IMR-90 (cell line): ENCODE measurements at regions of chr7 and their contacts with region 1.

Region 1: GRCh38 chr7:45872116-45873034 is 507 bp downstream of the CCDC201 start:
- DNase-seq: no peak
- ATAC-seq: 0 out of 2 replicates have a peak, but pooled peaks have one; percentile 22
- H3K4me3 ChIP-seq: no peak overlapping the region
- H3K27ac ChIP-seq: no peak overlapping the region
- H3K4me1 ChIP-seq: peaks cover 6% of the 10 kb centered on the region
- H3K27me3 ChIP-seq: no peaks in the 10 kb centered on the region
- CTCF ChIP-seq: peak; percentile 43
- POLR2A ChIP-seq: no peak
- RAD21 ChIP-seq: peak; percentile 17; the same call in 1 of the 2 replicates

Region 2: DNA sequence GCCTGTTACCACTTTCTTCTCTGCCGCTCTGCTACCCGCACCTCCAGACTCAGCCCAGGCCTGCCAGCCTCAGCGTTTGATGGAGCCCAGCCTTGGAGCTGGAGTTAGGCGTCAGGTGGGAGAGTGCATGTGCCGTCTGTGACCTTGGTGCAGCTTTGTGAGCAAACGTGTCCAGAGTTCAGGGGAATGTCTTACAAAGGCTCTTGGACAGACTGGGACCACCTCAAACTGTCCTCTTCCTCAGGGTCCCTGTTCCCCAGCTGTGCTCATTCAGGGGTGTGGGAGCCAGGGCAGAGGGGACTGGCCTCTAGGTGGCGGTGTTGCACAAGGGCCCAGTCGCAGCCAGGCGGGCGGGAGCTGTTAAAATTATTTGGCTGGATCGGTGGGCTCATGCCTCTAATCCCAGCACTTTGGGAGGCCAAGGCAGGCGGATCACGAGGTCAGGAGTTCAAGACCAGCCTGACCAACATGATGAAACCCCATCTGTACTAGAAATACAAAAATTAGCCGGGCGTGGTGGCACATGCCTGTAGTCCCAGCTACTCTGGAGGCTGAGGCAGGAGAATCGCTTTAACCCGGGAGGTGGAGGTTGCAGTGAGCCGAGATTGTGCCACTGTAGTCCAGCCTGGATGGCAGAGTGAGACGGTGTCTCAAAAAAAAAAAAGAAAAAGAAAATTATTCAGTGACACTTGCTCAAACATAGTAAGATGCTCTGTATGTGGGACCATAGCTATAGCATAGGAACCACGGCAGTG is 209.0 kb before region 1 on chr7:
- CTCF ChIA-PET with region 1: no interaction called
- POLR2A ChIA-PET with region 1: no interaction called
- dilution Hi-C with region 1: no loop called
- in situ Hi-C with region 1: loop called (anchors 25 kb)
- intact Hi-C with region 1: no loop called
- DNase-seq: peak; percentile 12
- ATAC-seq: peak; percentile 80
- H3K4me3 ChIP-seq: no peak overlapping the region
- H3K27ac ChIP-seq: no peak overlapping the region
- H3K4me1 ChIP-seq: no peaks in the 10 kb centered on the region
- H3K27me3 ChIP-seq: peaks cover 12% of the 10 kb centered on the region; the same call in 1 of the 2 replicates
- CTCF ChIP-seq: peak; percentile 78
- POLR2A ChIP-seq: no peak
- RAD21 ChIP-seq: peak; percentile 83

Region 3: GRCh38 chr7:45888185-45888992 is 16.0 kb after region 1 on chr7 and contains the start of gene IGFBP1:
- CTCF ChIA-PET with region 1: no interaction called
- POLR2A ChIA-PET with region 1: no interaction called
- dilution Hi-C with region 1: no loop called
- in situ Hi-C with region 1: no loop called
- intact Hi-C with region 1: no loop called
- DNase-seq: peak; percentile 25
- ATAC-seq: peak; percentile 77
- H3K4me3 ChIP-seq: peak within 1 kb of the TSS; percentile 25
- H3K27ac ChIP-seq: no peak within 1 kb of the TSS; the same call in 1 of the 2 replicates
- H3K4me1 ChIP-seq: no peaks in the 10 kb centered on the region
- H3K27me3 ChIP-seq: peaks cover 26% of the 10 kb centered on the region
- CTCF ChIP-seq: no peak
- POLR2A ChIP-seq: no peak
- RAD21 ChIP-seq: no peak
- total RNA-seq, gene IGFBP1: not detected in 2 replicates

Region 4: GRCh38 chr7:47102331-47102841 is 1230.0 kb after region 1 on chr7:
- CTCF ChIA-PET with region 1: interaction called, 10 read pairs
- POLR2A ChIA-PET with region 1: no interaction called
- dilution Hi-C with region 1: no loop called
- in situ Hi-C with region 1: no loop called
- intact Hi-C with region 1: no loop called
- DNase-seq: no peak
- ATAC-seq: no peak
- H3K4me3 ChIP-seq: no peak overlapping the region
- H3K27ac ChIP-seq: no peak overlapping the region
- H3K4me1 ChIP-seq: no peaks in the 10 kb centered on the region
- H3K27me3 ChIP-seq: no peaks in the 10 kb centered on the region
- CTCF ChIP-seq: no peak
- POLR2A ChIP-seq: no peak
- RAD21 ChIP-seq: no peak